GM10248 (cell line): ENCODE measurements at regions of chr4 and their contacts with region 1.

Region 1: GRCh38 chr4:118981839-118982381 is 93.3 kb downstream of the SYNPO2 start:
- DNase-seq: peak; percentile 65
- CTCF ChIP-seq: peak; percentile 58

Region 2: DNA sequence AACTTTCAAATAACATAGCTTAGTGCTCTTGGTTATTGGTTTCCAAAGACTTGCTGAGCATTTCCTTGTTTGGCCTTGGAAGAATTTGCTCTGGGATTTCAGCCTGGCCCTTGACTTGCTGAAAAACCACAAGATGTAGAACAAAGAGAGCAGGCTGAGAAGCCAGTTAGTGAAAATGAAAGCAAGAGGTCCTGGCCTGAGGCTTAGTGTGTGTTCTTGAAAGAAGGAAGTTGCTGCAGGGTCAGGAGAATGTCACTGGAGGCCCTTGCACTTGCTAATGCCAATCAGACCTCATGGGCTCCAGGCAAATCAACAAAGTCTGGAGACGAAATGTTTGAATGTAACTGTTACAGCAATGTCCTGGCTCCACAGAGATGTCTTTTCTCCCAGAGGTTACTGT is 13.9 kb before region 1 on chr4:
- CTCF ChIA-PET with region 1: interaction called, 23 read pairs
- POLR2A ChIA-PET with region 1: no interaction called
- DNase-seq: peak; percentile 62
- CTCF ChIP-seq: no peak

Region 3: GRCh38 chr4:118994030-118994429 is 12.1 kb after region 1 on chr4:
- CTCF ChIA-PET with region 1: interaction called, 11 read pairs
- POLR2A ChIA-PET with region 1: no interaction called
- DNase-seq: no peak
- CTCF ChIP-seq: no peak